Colonic mucosa (tissue), 4 donors: ENCODE measurements at regions of chr10 and their contacts with region 1.

Region 1: DNA sequence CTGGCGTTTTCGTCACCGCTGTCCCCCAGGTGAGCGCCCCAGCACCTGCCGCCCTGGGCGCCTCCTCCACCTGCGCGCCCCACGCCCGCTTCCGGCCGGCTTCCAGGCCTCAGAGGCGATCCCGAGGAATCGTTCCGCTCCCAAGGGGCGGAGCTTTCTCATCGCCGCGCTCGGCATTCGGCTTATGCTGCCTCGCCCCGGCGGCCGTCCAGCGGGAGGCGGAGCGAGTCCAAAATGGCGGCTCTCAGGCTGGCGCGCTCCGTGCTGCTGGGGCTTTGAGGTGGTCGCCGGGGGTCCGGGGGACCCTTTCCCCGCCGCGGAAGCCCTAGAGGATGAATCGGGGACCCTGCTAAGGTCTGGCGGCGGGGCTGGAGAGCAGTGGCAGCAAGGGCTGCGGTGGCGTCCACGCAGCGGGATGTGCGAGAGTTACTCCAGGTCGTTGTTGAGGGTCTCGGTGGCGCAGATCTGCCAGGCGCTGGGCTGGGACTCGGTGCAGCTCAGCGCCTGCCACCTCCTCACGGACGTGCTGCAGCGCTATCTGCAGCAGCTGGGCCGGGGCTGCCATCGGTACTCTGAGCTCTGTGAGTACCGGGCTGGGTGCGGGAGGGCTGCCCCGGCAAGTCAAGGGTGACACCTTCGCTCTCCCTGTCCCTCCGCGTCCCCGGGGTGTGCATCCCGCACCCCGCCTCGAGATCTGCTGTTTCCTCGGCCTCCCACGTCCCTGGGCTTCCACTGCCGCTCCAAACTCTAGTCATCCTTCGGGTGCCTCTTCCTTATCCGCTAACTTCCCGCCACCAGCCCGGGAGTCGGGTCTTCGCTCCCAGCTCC is at the start of gene TAF3:
- DNase-seq: peak; percentile 94
- H3K4me3 ChIP-seq: peak within 1 kb of the TSS; percentile 80
- H3K27ac ChIP-seq: no peak within 1 kb of the TSS
- H3K4me1 ChIP-seq: no peaks in the 10 kb centered on the region
- H3K27me3 ChIP-seq: no peaks in the 10 kb centered on the region
- CTCF ChIP-seq: no peak
- total RNA-seq, gene TAF3: 4.4 to 6.3 TPM

Region 2: GRCh38 chr10:7767209-7767608 is 51.3 kb before region 1 on chr10:
- intact Hi-C with region 1: loop called (anchors 10 kb)
- DNase-seq: no peak
- H3K4me3 ChIP-seq: no peak overlapping the region
- H3K27ac ChIP-seq: no peak overlapping the region
- H3K4me1 ChIP-seq: no peaks in the 10 kb centered on the region
- H3K27me3 ChIP-seq: no peaks in the 10 kb centered on the region
- CTCF ChIP-seq: no peak

Region 3: DNA sequence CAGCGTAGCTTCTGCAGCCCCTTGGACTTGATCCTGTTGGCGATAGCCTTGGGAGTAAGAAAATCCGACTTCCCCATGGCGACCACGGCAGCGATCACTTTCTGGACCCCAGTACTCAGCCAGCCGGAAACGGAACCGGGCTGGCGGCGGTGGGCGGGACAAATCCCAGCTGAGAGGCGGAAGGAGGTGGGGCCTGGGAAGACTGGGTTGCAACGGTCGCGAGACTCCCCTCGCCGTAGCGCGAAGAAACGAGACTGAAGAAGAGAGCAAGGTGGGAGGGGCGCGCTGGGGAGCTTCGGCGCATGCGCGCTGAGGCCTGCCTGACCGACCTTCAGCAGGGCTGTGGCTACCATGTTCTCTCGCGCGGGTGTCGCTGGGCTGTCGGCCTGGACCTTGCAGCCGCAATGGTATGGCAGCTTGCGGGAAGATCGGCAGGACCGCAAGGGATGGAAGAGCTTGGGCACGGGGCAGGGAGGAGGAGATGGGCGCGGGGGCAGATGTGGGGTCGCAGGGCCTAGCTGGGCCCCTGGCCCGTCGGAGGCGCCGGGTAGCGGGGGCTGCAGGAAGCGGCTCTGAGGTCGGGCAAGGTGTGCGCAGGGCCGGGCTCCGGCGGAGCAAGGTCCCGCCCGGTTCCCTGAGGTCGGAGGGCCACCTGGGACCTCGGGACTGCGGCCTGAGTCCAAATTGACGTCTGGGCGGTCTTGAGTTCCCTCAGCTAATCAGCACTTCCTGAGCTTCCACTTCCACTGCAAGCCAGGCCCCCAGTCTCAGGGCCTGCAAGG is 30.5 kb before region 1 on chr10 and contains the starts of genes ATP5F1C and KIN:
- intact Hi-C with region 1: loop called (anchors 2 kb)
- DNase-seq: peak; percentile 98
- H3K4me3 ChIP-seq: peak within 1 kb of the TSS; percentile 95
- H3K27ac ChIP-seq: peak within 1 kb of the TSS; percentile 60
- H3K4me1 ChIP-seq: peaks cover 26% of the 10 kb centered on the region
- H3K27me3 ChIP-seq: no peaks in the 10 kb centered on the region
- CTCF ChIP-seq: no peak
- total RNA-seq, gene ATP5F1C: 444 to 610 TPM
- total RNA-seq, gene KIN: 10.9 to 11.6 TPM